ENCODE measurements at regions of chr14 and their contacts with region 1.

Region 1: GRCh38 chr14:92352158-92352985 is 29.4 kb downstream of the SLC24A4 start:
- DNase-seq: peak; percentile 67
- H3K4me3 Mint-ChIP-seq: no peak overlapping the region
- H3K27ac Mint-ChIP-seq: no peak overlapping the region
- H3K4me1 Mint-ChIP-seq: no peaks in the 10 kb centered on the region
- H3K27me3 Mint-ChIP-seq: peaks cover 17% of the 10 kb centered on the region

Region 2: DNA sequence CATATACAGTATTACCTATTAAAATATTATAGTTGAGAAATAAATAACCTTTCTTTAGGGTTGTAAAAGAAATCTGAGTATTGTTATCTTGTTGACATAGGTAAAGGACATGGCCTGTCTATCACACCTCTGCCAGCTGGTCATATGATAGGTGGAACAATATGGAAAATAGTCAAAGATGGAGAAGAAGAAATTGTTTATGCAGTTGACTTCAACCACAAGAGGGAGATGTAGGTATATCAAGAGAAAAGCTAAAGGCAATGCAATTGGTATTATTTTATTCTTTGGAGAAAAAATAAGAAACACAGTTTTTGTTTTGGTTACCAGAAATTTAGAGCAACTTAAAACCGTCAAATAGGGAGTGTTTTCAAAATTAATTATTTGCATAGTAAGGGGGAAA is 217.1 kb before region 1 on chr14:
- CTCF ChIA-PET with region 1: interaction called, 28 read pairs
- DNase-seq: no peak
- H3K4me3 Mint-ChIP-seq: no peak overlapping the region
- H3K27ac Mint-ChIP-seq: no peak overlapping the region
- H3K4me1 Mint-ChIP-seq: no peaks in the 10 kb centered on the region
- H3K27me3 Mint-ChIP-seq: no peaks in the 10 kb centered on the region

Region 3: DNA sequence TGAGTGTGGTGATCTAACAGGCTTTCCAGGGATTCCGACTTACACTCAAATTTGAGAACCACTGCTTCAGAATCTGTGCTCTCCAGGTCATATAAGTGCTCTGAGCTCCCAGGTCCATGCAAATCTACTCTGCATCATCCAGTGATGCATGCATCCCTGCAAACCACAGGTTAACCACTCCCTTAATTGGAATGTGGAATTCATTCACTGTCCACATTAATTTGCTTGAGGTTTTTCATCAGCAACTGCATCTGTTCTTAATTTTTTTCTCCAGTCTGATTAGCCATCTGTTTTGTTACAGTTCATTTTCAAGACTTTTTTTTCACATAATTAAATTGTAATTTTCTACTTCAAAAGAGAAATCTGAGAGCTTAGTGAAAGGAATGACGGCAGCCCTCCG is 117.8 kb after region 1 on chr14:
- CTCF ChIA-PET with region 1: no interaction called
- DNase-seq: no peak
- H3K4me3 Mint-ChIP-seq: no peak overlapping the region
- H3K27ac Mint-ChIP-seq: no peak overlapping the region
- H3K4me1 Mint-ChIP-seq: no peaks in the 10 kb centered on the region
- H3K27me3 Mint-ChIP-seq: peaks cover 20% of the 10 kb centered on the region